Mucosa of descending colon (tissue), 3 donors: ENCODE measurements at regions of chr11 and their contacts with region 1.

Region 1: GRCh38 chr11:10933455-10934292 is 75.8 kb upstream of the ZBED5 start:
- DNase-seq: peak; percentile 90 to 96 (median 92)
- ATAC-seq: peak; percentile 77
- H3K4me3 ChIP-seq: no peak overlapping the region
- H3K4me1 ChIP-seq: peaks cover 14% of the 10 kb centered on the region
- CTCF ChIP-seq: peak; percentile 93

Region 2: GRCh38 chr11:10742471-10743208 is 191.0 kb before region 1 on chr11:
- intact Hi-C with region 1: no loop called
- DNase-seq: peak in 1 of 3 donors; percentile 60
- ATAC-seq: peak; percentile 87
- H3K4me3 ChIP-seq: no peak overlapping the region
- H3K4me1 ChIP-seq: peaks cover 24% of the 10 kb centered on the region
- CTCF ChIP-seq: no peak

Region 3: DNA sequence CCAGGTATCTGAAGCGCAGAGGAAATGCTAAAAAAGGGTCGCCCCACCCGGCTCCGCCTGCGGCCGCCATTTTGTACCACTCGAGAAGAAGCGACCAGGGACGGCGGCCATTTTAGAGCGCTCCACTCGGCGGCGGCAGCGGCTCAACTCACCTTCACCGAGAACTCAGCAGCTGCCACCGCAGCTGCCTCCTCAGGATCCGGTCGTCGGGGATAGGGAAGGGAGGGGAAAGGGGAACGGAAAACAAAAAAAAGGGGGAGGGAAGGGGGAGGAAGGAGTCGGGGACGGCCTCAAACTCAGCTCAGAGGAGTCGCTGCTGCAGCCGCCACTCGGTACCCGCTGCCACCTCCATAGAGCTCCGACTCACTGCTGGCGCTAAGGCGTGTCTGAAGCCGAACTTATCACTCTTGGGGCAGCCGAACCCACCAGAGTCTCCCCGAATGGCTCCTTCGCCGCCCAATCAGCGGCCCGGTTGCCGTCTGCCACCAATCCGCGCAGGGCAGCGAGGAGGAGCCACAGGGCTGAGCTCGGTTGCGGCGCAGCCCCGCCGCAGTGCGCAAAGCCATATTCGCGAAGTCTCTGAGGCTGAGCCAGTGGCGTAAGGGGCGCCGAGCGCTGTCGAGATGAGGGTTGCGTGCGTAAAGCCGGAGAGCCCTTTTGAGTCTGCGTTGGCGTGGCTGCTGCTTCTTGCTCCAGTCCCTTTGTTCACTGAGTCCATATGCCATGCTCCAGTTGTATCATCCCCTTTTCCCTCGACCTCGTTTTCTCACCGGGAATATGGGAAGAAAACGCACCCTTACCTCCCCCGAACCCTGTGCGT is 124.9 kb before region 1 on chr11 and contains the start of gene EIF4G2:
- intact Hi-C with region 1: loop called (anchors 10 kb)
- DNase-seq: peak; percentile 97 to 99 (median 99)
- ATAC-seq: peak; percentile 93
- H3K4me3 ChIP-seq: peak within 1 kb of the TSS; percentile 100
- H3K4me1 ChIP-seq: peaks cover 30% of the 10 kb centered on the region
- CTCF ChIP-seq: peak; percentile 7
- total RNA-seq, gene EIF4G2: 776 to 976 (median 934) TPM

Region 4: DNA sequence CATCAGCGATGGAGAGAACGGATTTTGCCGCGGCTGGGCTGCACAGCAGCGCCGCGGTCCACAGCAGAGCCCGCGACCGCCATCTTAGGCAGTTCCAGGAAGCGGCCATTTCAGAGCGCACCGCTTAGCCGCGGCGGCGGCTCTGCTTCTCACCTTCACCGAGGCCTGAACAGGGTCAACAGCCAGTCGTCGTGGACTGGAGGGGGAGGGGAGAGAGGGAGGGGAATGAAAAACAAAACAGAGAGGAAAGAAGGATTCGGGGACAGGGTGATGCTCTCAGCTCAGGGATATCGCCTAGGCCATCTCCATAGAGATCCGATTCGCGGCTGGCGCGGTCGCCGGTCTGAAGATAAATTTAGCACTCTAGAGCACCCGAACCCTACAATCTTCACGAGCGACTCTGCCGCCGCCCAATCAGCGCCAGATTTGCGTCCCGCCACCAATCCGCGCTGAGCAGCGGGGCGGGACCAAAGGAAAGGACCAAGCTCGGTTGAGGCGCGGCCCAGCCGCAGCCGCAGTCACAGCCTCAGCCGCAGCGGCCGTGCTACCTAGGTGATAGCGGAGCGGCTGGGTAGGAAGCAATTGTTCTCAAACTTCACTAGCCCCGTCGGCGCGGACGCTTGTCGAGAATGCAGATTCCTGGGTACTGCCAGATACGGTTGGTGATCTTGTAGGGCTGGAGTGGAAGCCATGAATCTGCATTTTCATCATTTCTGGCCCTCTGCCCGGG is 75.8 kb before region 1 on chr11 and contains the start of gene ZBED5:
- intact Hi-C with region 1: loop called in 1 of 2 experiments (anchors 5 kb)
- DNase-seq: peak; percentile 98 to 99 (median 98)
- ATAC-seq: peak; percentile 93
- H3K4me3 ChIP-seq: peak within 1 kb of the TSS; percentile 47
- H3K4me1 ChIP-seq: peaks cover 20% of the 10 kb centered on the region
- CTCF ChIP-seq: no peak
- total RNA-seq, gene ZBED5: 39.5 to 54.2 (median 42.6) TPM

Region 5: DNA sequence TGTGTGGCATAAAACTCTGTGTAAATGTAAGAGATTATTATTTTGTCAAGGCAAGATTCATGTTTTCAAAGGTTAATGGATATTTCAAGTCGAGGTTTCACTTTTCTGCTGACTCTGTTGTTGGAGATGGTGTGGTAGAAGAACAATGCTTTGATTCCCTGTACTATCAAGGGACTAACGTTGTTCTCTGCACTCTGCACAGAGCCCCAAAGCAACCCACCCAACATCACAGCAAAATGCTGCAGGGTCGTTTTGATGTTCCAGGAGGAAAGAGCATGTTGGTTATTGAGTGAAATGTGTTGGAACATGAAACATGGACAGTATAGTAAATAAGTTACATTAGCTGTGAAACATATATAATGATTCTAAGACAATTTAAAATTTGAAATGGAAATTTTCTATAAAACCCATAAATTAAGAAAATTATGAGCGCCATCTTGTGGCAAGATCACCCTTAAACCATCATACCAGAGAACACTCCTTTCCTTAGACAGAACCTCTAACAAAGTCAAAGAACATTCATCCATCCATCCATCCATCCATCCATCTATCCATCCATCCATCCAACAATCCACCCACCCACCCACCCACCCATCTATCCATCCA is 88.6 kb after region 1 on chr11:
- intact Hi-C with region 1: loop called (anchors 5 kb)
- DNase-seq: peak in 1 of 3 donors; percentile 67
- ATAC-seq: no peak
- H3K4me3 ChIP-seq: no peak overlapping the region
- H3K4me1 ChIP-seq: no peaks in the 10 kb centered on the region
- CTCF ChIP-seq: no peak

Region 6: DNA sequence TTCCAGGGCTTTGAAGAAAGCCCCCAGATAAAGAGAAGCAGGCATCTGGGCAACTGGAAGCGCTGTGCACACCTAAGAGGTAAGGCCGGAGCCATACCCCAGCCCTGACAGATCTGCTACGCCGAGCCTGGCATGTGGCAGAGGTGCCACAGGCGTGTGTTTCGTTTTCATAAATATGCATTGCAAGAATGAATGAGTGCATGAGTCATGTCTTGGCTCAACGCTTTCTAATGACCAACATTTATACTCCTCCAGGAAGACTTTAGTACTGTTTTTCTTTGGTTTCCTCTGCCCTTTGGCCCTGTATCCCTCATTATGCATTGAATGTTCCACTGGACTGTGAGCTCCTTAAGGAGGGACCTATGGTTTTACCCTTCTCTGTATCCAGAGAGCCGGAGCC is 458.1 kb after region 1 on chr11:
- intact Hi-C with region 1: no loop called
- DNase-seq: peak in 2 of 3 donors; percentile 52 to 68
- ATAC-seq: peak; percentile 91
- H3K4me3 ChIP-seq: no peak overlapping the region
- H3K4me1 ChIP-seq: peaks cover 23% of the 10 kb centered on the region
- CTCF ChIP-seq: no peak